Right cardiac atrium (tissue), 5 donors: ENCODE measurements at regions of chr2 and their contacts with region 1.

Region 1: DNA sequence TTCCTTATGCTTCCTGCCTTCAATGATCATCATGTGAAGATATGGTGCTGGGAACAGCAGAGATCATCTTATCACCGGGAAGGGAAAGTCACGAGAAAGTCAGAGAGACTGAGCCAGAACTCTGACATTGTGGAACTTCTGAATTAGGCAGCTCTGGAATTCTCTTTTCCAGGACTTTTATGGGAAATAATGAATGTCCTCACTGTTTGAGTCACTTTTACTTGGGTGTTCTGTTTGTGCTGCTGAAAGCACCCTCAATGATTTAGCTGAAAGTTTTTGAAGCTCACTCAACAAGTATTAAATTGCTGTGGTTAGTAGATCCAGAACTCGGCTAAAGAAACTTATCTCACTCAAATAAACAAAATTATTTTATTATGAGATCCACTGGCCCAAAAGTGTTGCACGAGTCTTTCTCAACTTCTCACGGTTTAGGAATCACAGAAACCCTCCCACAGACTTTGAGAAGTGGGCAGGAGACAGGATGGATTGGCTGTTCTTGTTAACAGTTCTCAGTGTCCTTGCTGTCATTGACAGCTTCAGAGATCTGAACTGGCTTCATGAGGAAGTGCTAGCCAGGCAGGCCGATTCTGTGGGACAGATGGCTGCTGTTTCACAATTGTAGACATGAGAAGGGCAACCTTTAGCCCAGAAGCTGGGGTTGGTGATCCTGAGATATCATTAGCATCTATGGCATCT is 26.4 kb upstream of the ATRAID start:
- DNase-seq: peak; percentile 52 to 67 (median 52)
- ATAC-seq: peak; percentile 83 to 90
- H3K4me3 ChIP-seq: no peak overlapping the region
- H3K27ac ChIP-seq: peak overlapping the region; percentile 91
- H3K4me1 ChIP-seq: peaks cover 3% of the 10 kb centered on the region
- H3K27me3 ChIP-seq: no peaks in the 10 kb centered on the region

Region 2: GRCh38 chr2:26970244-26970920 is 215.1 kb before region 1 on chr2 and contains the start of gene MAPRE3:
- intact Hi-C with region 1: loop called in 1 of 4 experiments (anchors 10 kb)
- DNase-seq: peak; percentile 83 to 95 (median 93)
- ATAC-seq: peak; percentile 95 to 96
- H3K4me3 ChIP-seq: peak within 1 kb of the TSS; percentile 53
- H3K27ac ChIP-seq: peak within 1 kb of the TSS; percentile 30
- H3K4me1 ChIP-seq: peaks cover 4% of the 10 kb centered on the region
- H3K27me3 ChIP-seq: no peaks in the 10 kb centered on the region
- total RNA-seq, gene MAPRE3: 43.6 to 58.8 (median 49.9) TPM

Region 3: DNA sequence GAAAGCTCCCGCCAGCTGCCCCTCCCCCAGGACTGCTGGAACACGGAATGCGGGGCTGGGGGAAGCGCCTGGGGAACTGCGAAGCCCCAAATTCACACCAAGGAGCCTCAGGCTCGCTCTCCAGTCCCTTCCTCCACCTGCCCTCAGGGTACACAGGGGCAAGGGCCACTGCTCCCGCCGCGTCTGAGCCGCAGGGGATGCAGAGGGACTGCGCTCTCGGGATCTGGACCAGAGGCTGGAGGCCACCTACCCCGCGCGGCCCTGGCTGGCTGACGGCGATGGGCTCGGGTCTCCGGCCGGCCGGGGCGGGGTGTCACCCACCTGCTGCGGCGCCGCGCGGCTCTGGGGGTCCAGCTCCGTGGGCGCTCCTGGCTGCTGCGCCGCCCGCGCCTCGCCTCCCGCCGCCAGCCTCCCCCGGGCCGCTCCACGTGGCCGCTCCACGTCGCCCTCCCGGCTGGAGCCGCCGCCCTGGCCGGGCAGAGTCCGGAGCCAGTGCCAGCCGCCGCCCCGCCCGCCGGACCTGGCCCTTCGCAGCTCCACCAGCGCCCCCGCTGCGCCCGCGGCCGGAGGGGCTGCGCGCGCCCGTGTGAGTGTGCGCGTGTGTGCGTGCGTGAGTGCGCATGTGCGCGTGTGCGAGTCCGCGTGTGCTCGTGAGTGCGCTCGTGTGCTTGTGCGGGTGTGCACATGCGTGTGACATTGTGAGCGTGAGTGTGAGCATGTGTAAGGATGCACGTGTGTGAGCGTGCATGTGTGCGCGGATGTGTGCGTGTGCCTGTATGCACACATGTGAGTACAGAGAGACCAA is 66.8 kb before region 1 on chr2 and contains the start of gene CGREF1:
- intact Hi-C with region 1: loop called in 1 of 4 experiments (anchors 5 kb)
- DNase-seq: peak in 1 of 3 donors; percentile 63
- ATAC-seq: no peak
- H3K4me3 ChIP-seq: peak within 1 kb of the TSS; percentile 36
- H3K27ac ChIP-seq: no peak within 1 kb of the TSS
- H3K4me1 ChIP-seq: peaks cover 3% of the 10 kb centered on the region
- H3K27me3 ChIP-seq: no peaks in the 10 kb centered on the region
- total RNA-seq, gene CGREF1: 4.0 to 9.6 (median 5.6) TPM

Region 4: GRCh38 chr2:27335311-27335710 is 149.8 kb after region 1 on chr2:
- intact Hi-C with region 1: no loop called
- DNase-seq: no peak
- ATAC-seq: no peak
- H3K4me3 ChIP-seq: no peak overlapping the region
- H3K27ac ChIP-seq: no peak overlapping the region
- H3K4me1 ChIP-seq: no peaks in the 10 kb centered on the region
- H3K27me3 ChIP-seq: no peaks in the 10 kb centered on the region